CD4-positive, alpha-beta T cell (primary cell): ENCODE measurements at regions of chr3 and their contacts with region 1.

Region 1: GRCh38 chr3:10198761-10199649 is 34.3 kb downstream of the IRAK2 start:
- DNase-seq: peak; percentile 50 to 94 (median 64)
- ATAC-seq: peak; percentile 81
- H3K4me3 ChIP-seq: no peak overlapping the region
- H3K4me3 Mint-ChIP-seq: peak overlapping the region; percentile 75
- H3K27ac ChIP-seq: peak overlapping the region; percentile 86 to 95
- H3K27ac Mint-ChIP-seq: peak overlapping the region; percentile 93
- H3K4me1 ChIP-seq: peaks cover 83% of the 10 kb centered on the region
- H3K4me1 Mint-ChIP-seq: peaks cover 71% of the 10 kb centered on the region
- H3K27me3 ChIP-seq: no peaks in the 10 kb centered on the region
- H3K27me3 Mint-ChIP-seq: no peaks in the 10 kb centered on the region
- CTCF ChIP-seq: no peak

Region 2: DNA sequence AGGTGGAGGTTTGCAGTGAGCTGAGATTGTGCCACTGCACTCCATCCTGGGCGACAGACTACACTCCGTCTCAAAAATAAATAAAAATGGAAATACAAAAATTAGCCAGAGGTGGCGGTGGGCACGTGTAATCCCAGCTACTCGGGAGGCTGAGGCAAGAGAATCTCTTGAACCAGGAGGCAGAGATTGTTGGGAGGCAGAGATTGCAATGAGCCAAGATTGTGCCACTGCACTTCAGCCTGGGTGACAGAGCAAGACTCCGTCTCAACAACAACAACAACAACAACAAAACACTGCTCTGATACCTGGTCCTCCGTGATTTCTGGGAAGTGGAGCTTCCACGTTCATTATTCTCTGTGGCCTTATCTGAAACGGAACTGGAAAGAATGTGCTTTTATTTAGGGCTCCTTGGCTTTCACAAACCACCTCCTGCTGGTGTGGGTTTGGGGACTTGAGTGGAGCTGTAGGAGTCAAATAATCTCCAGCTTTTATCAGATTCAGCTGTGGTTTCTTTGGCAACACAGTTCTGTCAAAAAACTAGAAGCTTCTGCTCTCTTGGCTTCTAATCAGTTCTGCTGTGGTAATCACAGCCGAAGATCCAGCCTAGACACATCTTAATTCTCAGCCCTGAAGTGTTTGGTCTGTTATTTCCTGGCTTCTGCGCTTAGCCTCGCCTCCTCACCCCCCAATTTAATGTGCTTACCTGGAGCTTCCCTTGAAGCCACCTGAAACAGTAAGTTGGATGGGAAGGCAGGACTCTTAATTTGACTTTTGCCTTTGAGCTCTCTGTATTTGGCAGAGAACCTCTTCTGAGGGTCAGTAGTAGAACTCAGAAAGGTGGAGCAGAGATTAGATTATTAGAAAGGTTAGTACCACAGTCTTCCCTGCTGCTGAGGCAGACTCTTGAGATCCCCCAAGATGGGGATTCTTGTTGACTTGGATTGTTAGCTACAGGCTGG is 12.9 kb before region 1 on chr3:
- CTCF ChIA-PET with region 1: interaction called, 5 read pairs
- POLR2A ChIA-PET with region 1: interaction called, 30 read pairs
- intact Hi-C with region 1: no loop called
- DNase-seq: peak in 4 of 14 experiments; percentile 39 to 69 (median 56)
- ATAC-seq: peak; percentile 80
- H3K4me3 ChIP-seq: no peak overlapping the region
- H3K4me3 Mint-ChIP-seq: peak overlapping the region; percentile 62
- H3K27ac ChIP-seq: peak overlapping the region; percentile 37 to 47
- H3K27ac Mint-ChIP-seq: peak overlapping the region; percentile 87
- H3K4me1 ChIP-seq: peaks cover 67% of the 10 kb centered on the region
- H3K4me1 Mint-ChIP-seq: peaks cover 62% of the 10 kb centered on the region
- H3K27me3 ChIP-seq: no peaks in the 10 kb centered on the region
- H3K27me3 Mint-ChIP-seq: no peaks in the 10 kb centered on the region
- CTCF ChIP-seq: no peak

Region 3: DNA sequence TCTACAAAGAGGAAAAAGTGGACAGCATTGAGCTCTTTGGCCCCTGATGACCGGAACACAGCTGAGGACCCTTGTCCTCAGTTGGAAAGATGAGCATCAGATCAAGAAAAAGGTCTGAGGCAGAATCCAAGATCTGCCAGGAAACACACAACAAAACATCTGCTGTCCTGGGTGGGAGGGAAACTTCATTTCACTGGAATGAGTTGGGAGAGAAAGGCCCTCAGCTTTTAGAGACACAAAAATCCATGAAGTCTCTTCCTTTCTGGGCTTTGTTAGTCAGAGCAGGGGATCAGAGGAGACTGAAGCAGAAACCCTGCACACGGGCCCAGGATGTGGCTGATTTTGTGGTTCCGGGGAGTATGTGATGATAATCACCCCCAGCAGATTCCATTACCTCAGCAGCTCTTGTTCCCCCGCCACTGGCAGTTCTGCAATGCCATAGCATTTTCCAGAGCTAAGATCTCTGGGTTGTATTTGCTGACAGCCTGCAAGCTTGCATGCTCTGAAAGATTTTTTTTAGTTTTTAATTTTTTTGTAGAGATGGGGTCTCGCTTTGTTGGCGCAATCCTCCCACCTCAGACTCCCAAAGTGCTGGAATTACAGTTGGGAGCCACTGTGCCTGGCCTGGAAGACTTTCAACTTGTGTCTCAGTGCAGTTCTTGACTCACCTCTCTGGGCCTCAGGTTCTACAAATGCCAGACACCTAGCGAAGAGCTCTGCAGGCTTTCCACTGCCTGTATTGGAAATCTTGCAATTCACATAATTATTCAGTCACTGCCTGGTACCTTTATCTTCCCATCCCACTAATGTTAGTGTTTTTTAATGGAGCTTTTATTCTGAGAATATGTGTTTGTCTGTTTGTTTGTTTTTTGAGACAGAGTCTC is 43.4 kb after region 1 on chr3:
- CTCF ChIA-PET with region 1: no interaction called
- POLR2A ChIA-PET with region 1: interaction called, 17 read pairs
- intact Hi-C with region 1: loop called in 1 of 2 experiments (anchors 2 kb)
- DNase-seq: peak; percentile 42 to 94 (median 68)
- ATAC-seq: peak; percentile 94
- H3K4me3 ChIP-seq: peak overlapping the region; percentile 6
- H3K4me3 Mint-ChIP-seq: peak overlapping the region; percentile 77
- H3K27ac ChIP-seq: peak overlapping the region; percentile 41 to 63
- H3K27ac Mint-ChIP-seq: peak overlapping the region; percentile 91
- H3K4me1 ChIP-seq: peaks cover 59% of the 10 kb centered on the region
- H3K4me1 Mint-ChIP-seq: peaks cover 62% of the 10 kb centered on the region
- H3K27me3 ChIP-seq: no peaks in the 10 kb centered on the region
- H3K27me3 Mint-ChIP-seq: no peaks in the 10 kb centered on the region
- CTCF ChIP-seq: no peak